Mammary epithelial cell (primary cell): ENCODE measurements at regions of chr1 and their contacts with region 1.

Region 1: DNA sequence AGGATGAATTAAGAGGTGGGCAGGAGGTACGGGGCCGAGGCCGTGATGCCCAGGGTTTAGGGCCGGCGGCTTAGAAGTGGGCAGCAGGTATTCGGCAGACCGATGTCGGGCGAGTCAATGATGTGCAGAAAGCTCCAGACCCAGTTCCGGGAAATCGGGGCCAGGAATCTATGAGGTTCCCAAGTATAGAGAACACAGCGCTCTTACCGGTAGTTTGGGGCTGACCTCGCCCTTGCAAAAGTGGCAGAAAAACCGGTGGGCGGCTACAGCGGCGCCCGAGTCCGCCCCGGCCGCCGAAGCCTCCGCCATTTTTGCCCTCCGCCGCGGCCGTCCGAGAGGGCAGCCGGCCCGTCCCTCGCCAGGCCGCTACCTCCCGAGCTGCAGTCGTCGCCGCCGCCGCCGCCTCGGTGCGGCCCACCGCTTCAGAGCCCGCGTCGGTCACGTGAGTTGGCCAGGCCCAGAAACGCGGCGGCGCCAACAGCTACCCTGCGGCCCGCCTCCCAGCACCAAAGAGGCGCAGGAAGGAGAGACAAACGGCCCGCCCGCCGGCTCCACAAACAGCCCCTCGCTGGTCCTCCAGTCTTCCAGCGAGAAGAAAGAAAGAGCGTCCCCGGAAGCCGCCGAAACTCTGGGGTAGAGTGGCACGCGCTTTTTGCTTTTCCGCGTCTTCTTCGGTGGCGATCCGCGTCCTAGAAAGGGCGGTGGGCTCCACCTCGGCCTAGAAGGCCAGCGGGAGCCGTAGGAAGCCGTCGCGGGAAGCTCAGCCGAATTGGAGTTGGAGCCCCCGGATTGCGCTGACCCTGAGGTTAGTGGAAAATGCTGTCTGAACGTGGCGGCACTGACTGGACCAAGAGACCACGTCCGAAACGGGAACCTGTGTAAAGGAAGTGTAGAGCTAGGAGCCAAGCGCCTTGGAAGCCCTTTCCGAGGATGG is at the starts of genes POLR3C and RNF115:
- DNase-seq: peak; percentile 90
- H3K4me3 ChIP-seq: peak within 1 kb of the TSS; percentile 82 to 95 (median 87)
- H3K27ac ChIP-seq: peak within 1 kb of the TSS; percentile 86
- H3K4me1 ChIP-seq: peaks cover 11% of the 10 kb centered on the region
- H3K27me3 ChIP-seq: no peaks in the 10 kb centered on the region
- CTCF ChIP-seq: no peak
- total RNA-seq, gene POLR3C: 36.2 to 44.3 TPM
- total RNA-seq, gene RNF115: 11.1 to 12.0 TPM

Region 2: GRCh38 chr1:145720554-145720876 is 103.3 kb before region 1 on chr1:
- CTCF ChIA-PET with region 1: no interaction called
- dilution Hi-C with region 1: no loop called
- in situ Hi-C with region 1: no loop called
- intact Hi-C with region 1: no loop called
- DNase-seq: peak; percentile 70
- H3K4me3 ChIP-seq: no peak overlapping the region
- H3K27ac ChIP-seq: no peak overlapping the region
- H3K4me1 ChIP-seq: peaks cover 19% of the 10 kb centered on the region
- H3K27me3 ChIP-seq: no peaks in the 10 kb centered on the region
- CTCF ChIP-seq: no peak

Region 3: GRCh38 chr1:145730900-145731299 is 92.9 kb before region 1 on chr1:
- CTCF ChIA-PET with region 1: no interaction called
- dilution Hi-C with region 1: no loop called
- in situ Hi-C with region 1: no loop called
- intact Hi-C with region 1: loop called (anchors 5 kb)
- DNase-seq: no peak
- H3K4me3 ChIP-seq: no peak overlapping the region
- H3K27ac ChIP-seq: no peak overlapping the region
- H3K4me1 ChIP-seq: no peaks in the 10 kb centered on the region
- H3K27me3 ChIP-seq: no peaks in the 10 kb centered on the region
- CTCF ChIP-seq: peak in 1 of 2 donors; percentile 14

Region 4: DNA sequence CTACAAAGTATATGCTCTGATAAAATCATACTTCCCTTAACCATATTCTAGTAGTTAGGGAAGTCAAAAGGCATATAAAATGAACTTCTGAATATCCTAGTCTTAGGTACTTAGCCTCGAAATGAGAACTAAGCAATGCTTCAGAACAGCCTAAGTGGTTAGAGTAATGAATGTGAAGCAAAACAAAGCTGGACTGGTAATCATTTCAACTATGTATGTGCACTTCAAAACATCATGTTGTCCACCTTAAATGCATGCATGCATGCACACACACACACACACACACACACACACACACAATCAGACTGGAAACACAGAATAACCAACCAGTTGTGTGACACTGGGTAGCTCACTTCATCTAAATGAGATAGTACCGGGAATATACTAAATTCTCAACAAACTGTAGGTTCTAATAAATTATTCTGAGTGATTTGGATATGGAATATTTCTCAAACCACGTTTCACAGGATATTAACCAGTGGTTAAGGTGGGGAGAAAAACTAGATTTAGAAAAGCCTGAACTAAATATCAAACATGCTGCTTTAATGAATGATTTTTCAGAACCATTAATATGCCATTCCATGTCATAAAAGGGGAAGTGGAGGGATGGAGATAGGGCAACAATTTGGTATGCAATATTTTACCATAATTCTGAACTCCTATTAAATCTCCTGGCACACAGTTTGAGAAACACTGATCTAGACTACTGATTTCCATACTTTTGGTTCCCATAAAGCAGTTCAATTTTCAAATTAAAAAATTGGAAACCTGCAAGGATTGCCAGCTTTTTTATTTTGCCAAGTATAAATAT is 19.4 kb before region 1 on chr1:
- CTCF ChIA-PET with region 1: no interaction called
- dilution Hi-C with region 1: no loop called
- in situ Hi-C with region 1: no loop called
- intact Hi-C with region 1: no loop called
- DNase-seq: no peak
- H3K4me3 ChIP-seq: no peak overlapping the region
- H3K27ac ChIP-seq: no peak overlapping the region
- H3K4me1 ChIP-seq: no peaks in the 10 kb centered on the region
- H3K27me3 ChIP-seq: no peaks in the 10 kb centered on the region
- CTCF ChIP-seq: no peak

Region 5: GRCh38 chr1:145871994-145872924 is 48.4 kb after region 1 on chr1:
- CTCF ChIA-PET with region 1: no interaction called
- dilution Hi-C with region 1: no loop called
- in situ Hi-C with region 1: no loop called
- intact Hi-C with region 1: no loop called
- DNase-seq: peak; percentile 22
- H3K4me3 ChIP-seq: peak overlapping the region; percentile 27 to 39 (median 31)
- H3K27ac ChIP-seq: no peak overlapping the region
- H3K4me1 ChIP-seq: peaks cover 13% of the 10 kb centered on the region
- H3K27me3 ChIP-seq: no peaks in the 10 kb centered on the region
- CTCF ChIP-seq: no peak